Caco-2 (cell line): ENCODE measurements at regions of chr11 and their contacts with region 1.

Region 1: DNA sequence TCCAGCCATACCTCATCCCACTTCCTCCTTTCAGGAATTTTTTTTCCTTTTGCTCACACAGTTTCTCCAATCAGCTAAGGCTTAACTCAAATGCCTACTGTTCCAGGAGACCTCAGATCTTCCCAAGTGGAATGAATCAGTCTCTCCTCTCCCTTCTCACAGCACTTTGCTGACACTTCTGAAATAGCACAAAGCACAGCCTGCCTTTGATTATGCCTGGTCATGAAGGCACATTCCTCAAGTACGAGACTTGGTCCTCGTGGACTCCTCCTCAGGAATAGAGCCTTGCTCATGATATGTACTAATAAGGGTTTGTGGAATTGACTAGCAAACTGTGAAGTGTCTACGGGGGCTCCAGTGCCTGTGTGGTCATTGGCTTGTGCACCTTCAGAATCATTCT is 176.7 kb upstream of the TENM4 start:
- DNase-seq: no peak
- H3K4me3 ChIP-seq: no peak overlapping the region
- H3K4me3 Mint-ChIP-seq: no peak overlapping the region
- H3K27ac Mint-ChIP-seq: no peak overlapping the region
- H3K4me1 ChIP-seq: peaks cover 20% of the 10 kb centered on the region
- H3K4me1 Mint-ChIP-seq: peaks cover 13% of the 10 kb centered on the region
- H3K27me3 ChIP-seq: no peaks in the 10 kb centered on the region
- H3K27me3 Mint-ChIP-seq: peaks cover 2% of the 10 kb centered on the region
- CTCF ChIP-seq: no peak

Region 2: GRCh38 chr11:79575701-79576100 is 41.9 kb before region 1 on chr11:
- CTCF ChIA-PET with region 1: no interaction called
- POLR2A ChIA-PET with region 1: no interaction called
- intact Hi-C with region 1: loop called (anchors 2 kb)
- DNase-seq: peak in 1 of 2 experiments; percentile 53
- H3K4me3 ChIP-seq: no peak overlapping the region
- H3K4me3 Mint-ChIP-seq: peak overlapping the region; percentile 17
- H3K27ac Mint-ChIP-seq: peak overlapping the region; percentile 63
- H3K4me1 ChIP-seq: peaks cover 66% of the 10 kb centered on the region
- H3K4me1 Mint-ChIP-seq: peaks cover 63% of the 10 kb centered on the region
- H3K27me3 ChIP-seq: no peaks in the 10 kb centered on the region
- H3K27me3 Mint-ChIP-seq: no peaks in the 10 kb centered on the region
- CTCF ChIP-seq: no peak

Region 3: DNA sequence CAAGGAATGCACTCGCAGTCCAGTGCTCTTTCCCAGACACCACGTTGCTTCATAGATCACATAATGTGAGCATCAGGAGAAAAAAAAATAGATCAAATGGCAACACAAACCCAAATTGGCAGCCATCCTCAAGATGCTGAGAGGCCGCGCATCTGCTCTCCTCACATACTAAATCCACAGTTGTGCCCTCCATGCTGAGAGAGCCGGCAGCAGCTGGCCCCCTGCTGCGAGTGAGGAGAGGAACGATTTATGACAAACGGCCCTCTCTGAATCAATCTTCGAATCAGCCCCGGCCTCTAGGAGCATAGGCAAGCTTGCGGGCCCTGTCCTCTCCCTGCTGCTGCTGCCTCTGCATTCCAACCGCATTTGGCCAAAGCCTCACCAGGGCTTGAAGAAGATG is 16.9 kb before region 1 on chr11:
- CTCF ChIA-PET with region 1: no interaction called
- POLR2A ChIA-PET with region 1: no interaction called
- intact Hi-C with region 1: no loop called
- DNase-seq: no peak
- H3K4me3 ChIP-seq: no peak overlapping the region
- H3K4me3 Mint-ChIP-seq: no peak overlapping the region
- H3K27ac Mint-ChIP-seq: no peak overlapping the region
- H3K4me1 ChIP-seq: no peaks in the 10 kb centered on the region
- H3K4me1 Mint-ChIP-seq: no peaks in the 10 kb centered on the region
- H3K27me3 ChIP-seq: no peaks in the 10 kb centered on the region
- H3K27me3 Mint-ChIP-seq: peaks cover 5% of the 10 kb centered on the region
- CTCF ChIP-seq: no peak

Region 4: DNA sequence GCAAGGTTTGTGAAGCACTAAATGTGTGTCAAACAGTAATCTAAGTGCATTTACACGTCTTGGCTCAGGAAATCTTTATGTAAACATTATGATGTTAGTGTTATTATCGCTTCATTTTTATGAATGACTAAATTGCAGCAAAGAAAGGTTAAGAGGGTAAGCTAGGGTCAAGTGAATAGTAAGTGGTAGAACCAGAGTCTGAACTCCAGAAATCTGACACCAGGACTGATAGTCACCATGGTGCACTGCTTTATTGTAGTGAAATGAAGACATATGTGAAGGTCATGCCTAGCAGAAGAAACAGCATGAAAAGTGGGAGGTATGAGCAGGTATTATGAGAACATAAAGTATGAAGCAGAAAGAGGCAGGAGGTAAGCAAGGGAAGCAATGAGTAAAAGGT is 191.9 kb after region 1 on chr11:
- CTCF ChIA-PET with region 1: no interaction called
- POLR2A ChIA-PET with region 1: no interaction called
- intact Hi-C with region 1: no loop called
- DNase-seq: no peak
- H3K4me3 ChIP-seq: no peak overlapping the region
- H3K4me3 Mint-ChIP-seq: no peak overlapping the region
- H3K27ac Mint-ChIP-seq: no peak overlapping the region
- H3K4me1 ChIP-seq: no peaks in the 10 kb centered on the region
- H3K4me1 Mint-ChIP-seq: no peaks in the 10 kb centered on the region
- H3K27me3 ChIP-seq: no peaks in the 10 kb centered on the region
- H3K27me3 Mint-ChIP-seq: no peaks in the 10 kb centered on the region
- CTCF ChIP-seq: no peak